ENCODE measurements at regions of chr1 and their contacts with region 1.

Region 1: DNA sequence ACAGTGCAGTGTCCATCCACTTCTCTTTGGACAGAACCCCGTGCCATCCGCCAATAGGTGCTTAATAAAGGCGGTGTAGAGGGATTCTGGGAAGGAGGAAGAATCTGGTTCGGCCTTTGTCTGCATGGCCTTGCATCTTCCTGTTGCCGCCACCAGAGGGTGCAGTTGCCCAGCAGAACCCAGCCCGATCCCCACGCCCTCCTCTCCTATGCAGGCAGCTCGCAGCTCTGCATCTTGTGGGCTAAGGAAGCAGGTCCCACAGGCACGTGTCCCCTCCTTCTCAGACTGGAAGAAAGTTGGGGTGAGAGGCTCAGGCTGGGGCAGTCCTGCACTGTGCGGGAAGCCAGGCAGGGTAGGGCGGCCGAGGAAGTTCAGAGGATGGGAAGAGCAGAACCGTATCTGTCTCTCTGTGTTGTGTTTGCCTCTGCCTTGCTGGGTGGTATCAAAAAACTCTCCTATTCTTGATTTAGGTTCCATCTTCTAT is 20.8 kb downstream of the NAV1 start:
- DNase-seq: peak; percentile 86
- ATAC-seq: peak; percentile 77
- H3K4me3 ChIP-seq: no peak overlapping the region
- H3K27ac ChIP-seq: peak overlapping the region; percentile 66
- H3K4me1 ChIP-seq: peaks cover 47% of the 10 kb centered on the region
- H3K27me3 ChIP-seq: no peaks in the 10 kb centered on the region
- CTCF ChIP-seq: peak; percentile 99
- POLR2A ChIP-seq: peak; percentile 71
- RAD21 ChIP-seq: peak; percentile 100

Region 2: DNA sequence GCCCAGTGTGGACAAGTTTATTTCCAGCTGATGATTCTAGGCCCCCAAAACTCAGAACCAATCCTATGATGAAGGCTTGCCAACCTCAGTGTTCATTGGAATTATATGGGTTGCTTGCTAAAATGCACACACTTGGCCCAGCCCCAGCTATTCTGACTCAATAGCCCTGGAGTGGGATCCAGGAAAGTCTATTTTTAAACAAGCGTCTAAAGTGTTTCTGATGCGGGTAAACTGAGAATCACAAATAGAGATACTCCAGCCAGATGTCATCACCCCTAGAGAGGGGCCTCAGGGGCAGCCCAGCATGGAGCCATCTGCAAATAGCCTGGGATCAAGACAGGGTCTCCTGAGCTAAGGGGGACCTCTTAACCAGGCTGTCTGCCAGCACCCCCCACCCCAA is 230.4 kb before region 1 on chr1:
- CTCF ChIA-PET with region 1: no interaction called
- POLR2A ChIA-PET with region 1: no interaction called
- dilution Hi-C with region 1: no loop called
- in situ Hi-C with region 1: no loop called
- intact Hi-C with region 1: no loop called
- DNase-seq: peak; percentile 69
- ATAC-seq: peak; percentile 75
- H3K4me3 ChIP-seq: no peak overlapping the region
- H3K27ac ChIP-seq: no peak overlapping the region
- H3K4me1 ChIP-seq: peaks cover 4% of the 10 kb centered on the region
- H3K27me3 ChIP-seq: peaks cover 58% of the 10 kb centered on the region
- CTCF ChIP-seq: no peak
- POLR2A ChIP-seq: no peak
- RAD21 ChIP-seq: no peak

Region 3: GRCh38 chr1:201584471-201585092 is 24.9 kb after region 1 on chr1:
- CTCF ChIA-PET with region 1: no interaction called
- POLR2A ChIA-PET with region 1: no interaction called
- dilution Hi-C with region 1: no loop called
- in situ Hi-C with region 1: no loop called
- intact Hi-C with region 1: loop called (anchors 1 kb)
- DNase-seq: peak; percentile 89
- ATAC-seq: peak; percentile 73
- H3K4me3 ChIP-seq: no peak overlapping the region
- H3K27ac ChIP-seq: peak overlapping the region; percentile 87
- H3K4me1 ChIP-seq: peaks cover 29% of the 10 kb centered on the region
- H3K27me3 ChIP-seq: no peaks in the 10 kb centered on the region
- CTCF ChIP-seq: no peak
- POLR2A ChIP-seq: no peak
- RAD21 ChIP-seq: no peak

Region 4: DNA sequence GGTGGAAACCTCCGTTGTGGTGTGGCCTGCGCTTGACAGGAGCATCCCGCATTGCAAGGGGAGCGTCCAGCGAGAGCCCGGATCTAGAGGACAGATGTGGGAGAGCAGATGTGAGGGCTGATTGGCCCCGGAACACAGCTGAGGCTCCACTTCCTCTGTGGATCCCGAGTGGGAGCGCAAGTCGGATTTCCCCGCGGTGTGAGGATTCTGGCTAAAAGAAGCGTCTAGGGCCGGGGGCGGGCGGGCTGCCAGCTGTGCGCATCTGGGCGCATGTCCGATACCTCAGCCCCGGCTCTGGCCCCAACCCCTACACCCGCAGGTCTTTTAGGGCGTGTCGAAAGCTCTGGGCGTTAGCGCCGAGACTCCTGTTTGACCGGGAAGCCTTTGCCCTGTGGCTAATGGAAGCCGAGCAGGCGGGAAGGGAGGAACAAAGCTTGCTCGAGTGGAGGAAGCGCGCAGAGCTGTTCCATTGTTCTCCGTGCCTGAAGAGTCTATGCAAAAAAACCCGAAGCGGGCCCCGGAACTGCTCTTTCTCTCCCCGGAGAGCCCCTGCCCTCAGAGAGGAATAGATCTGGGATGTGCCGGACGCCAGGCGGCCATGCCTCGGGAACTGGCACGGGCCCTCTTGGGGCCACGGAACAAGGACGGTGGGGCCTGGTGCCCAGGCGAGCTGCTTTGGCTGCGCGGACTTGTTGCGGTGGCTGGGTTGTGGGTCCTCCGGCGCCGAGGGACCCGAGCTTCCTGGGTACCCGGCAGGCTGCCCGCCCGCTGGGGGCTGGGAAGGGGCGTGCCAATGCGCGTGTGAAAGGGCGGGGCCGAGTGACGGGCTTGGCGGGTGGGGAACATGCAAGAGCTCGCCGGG is 90.3 kb after region 1 on chr1:
- CTCF ChIA-PET with region 1: interaction called, 3 read pairs
- POLR2A ChIA-PET with region 1: interaction called, 9 read pairs
- dilution Hi-C with region 1: no loop called
- in situ Hi-C with region 1: loop called (anchors 5 kb)
- intact Hi-C with region 1: loop called (anchors 1 kb)
- DNase-seq: peak; percentile 70
- ATAC-seq: peak; percentile 46
- H3K4me3 ChIP-seq: peak overlapping the region; percentile 67
- H3K27ac ChIP-seq: peak overlapping the region; percentile 93
- H3K4me1 ChIP-seq: peaks cover 35% of the 10 kb centered on the region
- H3K27me3 ChIP-seq: no peaks in the 10 kb centered on the region
- CTCF ChIP-seq: no peak
- POLR2A ChIP-seq: peak; percentile 54; the same call in 1 of the 2 replicates
- RAD21 ChIP-seq: no peak

Region 5: GRCh38 chr1:201709564-201710295 is 150.0 kb after region 1 on chr1:
- CTCF ChIA-PET with region 1: interaction called, 4 read pairs
- POLR2A ChIA-PET with region 1: no interaction called
- dilution Hi-C with region 1: no loop called
- in situ Hi-C with region 1: loop called (anchors 5 kb)
- intact Hi-C with region 1: loop called (anchors 1 kb)
- DNase-seq: peak; percentile 66
- ATAC-seq: peak; percentile 69
- H3K4me3 ChIP-seq: no peak overlapping the region
- H3K27ac ChIP-seq: peak overlapping the region; percentile 74
- H3K4me1 ChIP-seq: peaks cover 41% of the 10 kb centered on the region
- H3K27me3 ChIP-seq: no peaks in the 10 kb centered on the region
- CTCF ChIP-seq: peak; percentile 87
- POLR2A ChIP-seq: 0 out of 2 replicates have a peak, but pooled peaks have one; percentile 25
- RAD21 ChIP-seq: peak; percentile 94

Region 6: GRCh38 chr1:201792534-201793305 is 233.0 kb after region 1 on chr1:
- CTCF ChIA-PET with region 1: interaction called, 19 read pairs
- POLR2A ChIA-PET with region 1: no interaction called
- dilution Hi-C with region 1: no loop called
- in situ Hi-C with region 1: loop called (anchors 5 kb)
- intact Hi-C with region 1: loop called (anchors 1 kb)
- DNase-seq: peak; percentile 85
- ATAC-seq: peak; percentile 84
- H3K4me3 ChIP-seq: no peak overlapping the region
- H3K27ac ChIP-seq: peak overlapping the region; percentile 69
- H3K4me1 ChIP-seq: peaks cover 32% of the 10 kb centered on the region
- H3K27me3 ChIP-seq: no peaks in the 10 kb centered on the region
- CTCF ChIP-seq: peak; percentile 97
- POLR2A ChIP-seq: peak; percentile 35; the same call in 1 of the 2 replicates
- RAD21 ChIP-seq: peak; percentile 99